ENCODE measurements at regions of chr2 and their contacts with region 1.

Region 1: DNA sequence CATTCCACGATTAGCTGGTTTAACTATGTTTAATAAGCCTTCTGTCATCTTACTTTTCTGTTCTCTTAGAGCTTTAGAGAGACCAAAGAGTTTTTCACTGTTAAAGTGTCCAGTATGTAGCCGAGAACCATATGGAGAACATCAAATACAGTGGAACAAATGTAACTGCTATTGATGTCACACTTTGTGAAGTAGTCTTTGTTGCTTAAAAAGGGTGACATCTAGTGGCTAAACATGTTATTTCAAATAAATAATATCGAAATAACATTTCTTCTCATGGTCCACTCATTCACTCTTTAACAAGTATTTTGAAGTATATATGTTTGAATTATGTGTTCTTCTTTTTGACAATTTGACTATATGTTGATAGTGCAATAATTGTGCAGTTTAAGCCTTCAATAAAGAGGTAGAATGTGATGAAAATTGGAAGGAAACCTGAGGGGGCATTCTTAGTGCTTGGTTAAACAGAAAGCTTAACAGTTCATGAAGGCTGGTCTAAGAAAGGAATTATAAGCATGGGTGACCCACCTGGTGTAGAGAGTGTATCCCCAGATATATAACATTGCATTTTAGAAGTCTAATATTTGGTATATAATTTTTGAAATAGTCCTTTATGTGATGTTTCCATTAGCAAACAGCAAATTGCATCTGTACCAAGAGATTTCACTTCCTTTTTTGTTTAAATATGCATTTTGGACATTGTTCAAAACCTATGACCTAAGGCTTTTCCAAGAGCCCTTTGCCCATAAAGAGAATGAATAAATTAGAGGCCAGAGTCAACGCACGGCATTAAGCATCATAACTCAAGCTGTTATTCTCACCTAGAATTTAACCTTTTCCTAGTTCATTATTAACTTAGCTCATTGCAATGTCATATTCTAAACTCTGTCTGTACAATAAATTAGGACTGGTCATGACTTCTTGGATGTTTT is 112.1 kb downstream of the KYNU start:
- H3K4me3 Mint-ChIP-seq: no peak overlapping the region
- H3K27ac Mint-ChIP-seq: no peak overlapping the region
- H3K4me1 Mint-ChIP-seq: peaks cover 9% of the 10 kb centered on the region
- H3K27me3 Mint-ChIP-seq: no peaks in the 10 kb centered on the region

Region 2: DNA sequence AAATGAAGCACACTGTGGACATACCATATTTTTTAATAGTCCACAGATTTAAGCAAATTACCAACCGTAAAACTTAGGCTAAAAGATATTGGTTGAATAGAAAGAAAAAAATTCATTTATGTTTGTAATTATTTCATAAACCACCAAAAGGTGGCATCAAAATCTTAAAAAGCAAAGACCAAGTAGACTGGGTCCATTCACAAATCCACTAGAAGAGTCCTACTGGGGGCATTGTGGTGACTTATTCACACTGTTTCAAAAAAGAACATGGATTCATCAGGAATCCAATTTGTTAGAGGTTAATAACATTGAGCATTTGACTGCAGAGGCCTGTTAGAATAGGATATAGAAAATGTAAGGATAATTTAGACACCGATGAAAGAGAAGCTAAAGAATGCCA is 307.0 kb before region 1 on chr2:
- intact Hi-C with region 1: loop called (anchors 2 kb)
- H3K4me3 Mint-ChIP-seq: no peak overlapping the region
- H3K27ac Mint-ChIP-seq: no peak overlapping the region
- H3K4me1 Mint-ChIP-seq: no peaks in the 10 kb centered on the region
- H3K27me3 Mint-ChIP-seq: no peaks in the 10 kb centered on the region

Region 3: DNA sequence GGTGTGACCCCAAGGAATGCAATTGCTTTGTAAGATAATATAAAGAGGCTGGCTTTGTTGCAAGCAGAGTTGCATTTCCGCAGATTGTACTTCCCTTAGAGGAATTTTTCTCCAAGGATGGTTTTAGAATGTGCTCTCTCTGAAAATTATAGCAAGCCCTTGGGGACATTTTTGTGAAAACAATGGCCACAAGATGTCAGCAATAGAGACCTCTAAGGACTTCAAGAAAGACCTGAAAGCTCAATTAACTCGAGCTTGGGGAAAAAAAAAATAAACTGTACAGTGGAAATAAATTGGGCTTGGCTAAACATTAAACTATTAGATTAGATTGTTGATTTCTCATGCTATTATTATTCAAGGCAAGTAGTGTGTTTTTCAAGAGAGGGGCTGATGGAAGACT is 193.4 kb before region 1 on chr2:
- intact Hi-C with region 1: loop called (anchors 10 kb)
- H3K4me3 Mint-ChIP-seq: no peak overlapping the region
- H3K27ac Mint-ChIP-seq: no peak overlapping the region
- H3K4me1 Mint-ChIP-seq: peaks cover 14% of the 10 kb centered on the region
- H3K27me3 Mint-ChIP-seq: no peaks in the 10 kb centered on the region

Region 4: DNA sequence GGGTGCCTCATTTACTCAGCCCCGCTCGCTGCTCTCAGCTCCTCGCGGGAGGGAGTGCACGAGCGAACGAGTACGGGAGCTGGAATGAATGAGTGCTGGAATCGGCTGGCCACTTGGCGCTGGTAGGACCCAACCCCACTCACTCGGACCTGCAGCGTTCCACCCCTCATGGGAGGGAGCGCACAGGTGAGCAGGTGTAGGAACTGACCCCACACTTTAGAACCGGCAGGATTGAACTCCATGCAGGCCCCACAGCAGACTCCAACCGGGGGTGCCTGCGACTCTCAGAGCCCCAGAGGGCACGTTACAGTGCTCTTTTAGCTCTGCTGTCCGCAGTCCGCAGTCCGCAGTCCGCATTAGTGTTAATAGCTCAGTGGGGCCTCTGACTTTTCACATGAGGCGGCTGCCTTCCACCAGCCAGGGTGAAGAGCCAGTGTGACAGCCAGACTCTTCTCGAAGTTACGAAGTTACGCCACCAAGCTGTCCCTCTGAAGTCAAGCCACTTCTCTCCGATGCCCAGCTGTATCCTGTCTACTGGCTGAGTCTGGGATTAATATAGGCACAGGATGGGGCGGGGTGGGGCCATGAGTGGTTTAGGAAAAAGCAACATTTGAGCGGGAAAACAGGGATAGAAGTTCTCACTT is 37.0 kb after region 1 on chr2:
- intact Hi-C with region 1: no loop called
- H3K4me3 Mint-ChIP-seq: no peak overlapping the region
- H3K27ac Mint-ChIP-seq: no peak overlapping the region
- H3K4me1 Mint-ChIP-seq: peaks cover 24% of the 10 kb centered on the region
- H3K27me3 Mint-ChIP-seq: no peaks in the 10 kb centered on the region

Measured in dendritic cell treated with granulocyte-macrophage colony-stimulating factor and Interleukin-4, amounts not matched to agents 40 ng/mL and 50 ng/mL, for 4 days (primary cell).